Left ventricle myocardium superior (tissue), 1 donor: ENCODE measurements at regions of chr10 and their contacts with region 1.

Region 1: DNA sequence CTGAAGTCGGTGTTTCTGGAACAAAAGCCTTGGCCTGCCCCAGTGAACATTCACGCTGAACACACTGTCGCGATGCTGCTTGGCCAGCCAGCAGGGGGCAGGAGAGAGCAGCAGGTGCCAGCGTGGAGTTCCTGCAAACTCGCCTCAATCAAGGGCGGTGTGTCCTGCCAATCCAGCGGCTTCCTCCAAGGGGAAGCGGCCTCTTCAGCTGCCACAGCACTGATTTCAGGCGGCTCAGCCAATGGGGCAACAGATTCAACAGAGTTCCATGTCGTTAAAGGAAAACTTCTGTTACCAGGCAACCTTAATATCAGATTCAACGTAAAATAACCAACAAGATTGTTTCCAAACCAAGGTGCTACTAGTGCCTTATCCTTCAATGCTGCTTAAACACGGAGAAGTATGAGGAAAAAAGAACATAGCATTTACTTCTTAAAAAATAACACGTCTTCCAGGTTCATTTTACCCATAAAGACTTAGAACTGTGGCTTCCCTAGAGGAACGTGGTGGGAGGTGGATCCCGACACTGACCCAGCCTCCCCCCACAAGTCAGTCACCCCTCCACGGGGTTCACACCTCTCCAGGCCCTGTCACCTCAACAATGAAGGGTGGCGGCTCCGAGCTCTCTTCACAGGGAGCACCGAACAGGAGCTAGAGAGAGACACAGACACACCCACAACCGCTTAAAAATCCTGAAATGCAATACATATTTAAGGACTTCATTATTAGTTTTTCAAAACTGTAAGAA is 178.2 kb downstream of the DIP2C start:
- DNase-seq: peak; percentile 94
- ATAC-seq: peak; percentile 92

Region 2: DNA sequence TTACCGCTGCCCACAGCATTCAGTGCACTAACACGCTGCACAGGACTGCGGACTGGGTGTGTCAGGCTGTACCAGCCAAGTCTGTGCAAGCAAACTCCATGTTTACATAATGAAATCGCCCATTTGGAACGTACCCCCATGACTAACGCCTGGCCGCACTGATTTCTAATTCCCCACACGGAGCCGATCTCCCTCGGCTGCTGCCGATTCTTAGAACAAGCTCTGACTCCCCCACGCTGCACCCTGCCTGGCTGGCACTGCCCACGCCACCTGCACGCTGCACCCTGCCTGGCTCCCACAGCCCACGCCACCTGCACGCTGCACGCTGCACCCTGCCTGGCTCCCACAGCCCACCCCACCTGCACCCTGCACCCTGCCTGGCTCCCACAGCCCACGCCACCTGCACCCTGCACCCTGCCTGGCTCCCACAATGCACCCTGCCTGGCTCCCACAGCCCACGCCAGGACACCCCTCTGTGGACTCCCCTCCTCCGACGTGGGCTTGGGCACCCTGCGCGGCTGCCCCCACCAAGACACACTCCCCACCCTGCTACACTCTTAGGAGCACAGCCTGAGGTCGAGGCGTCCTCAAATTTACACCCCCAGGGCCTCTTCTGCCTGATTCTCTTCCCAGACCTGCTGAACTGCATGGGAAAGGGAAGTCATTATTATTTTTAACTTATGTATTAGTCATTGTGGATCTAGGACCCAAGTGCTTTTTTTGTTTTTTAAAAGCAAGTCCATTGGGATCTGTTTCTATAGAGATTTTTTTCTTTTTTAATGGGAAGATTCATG is 172.6 kb before region 1 on chr10:
- intact Hi-C with region 1: no loop called
- DNase-seq: no peak
- ATAC-seq: no peak

Region 3: DNA sequence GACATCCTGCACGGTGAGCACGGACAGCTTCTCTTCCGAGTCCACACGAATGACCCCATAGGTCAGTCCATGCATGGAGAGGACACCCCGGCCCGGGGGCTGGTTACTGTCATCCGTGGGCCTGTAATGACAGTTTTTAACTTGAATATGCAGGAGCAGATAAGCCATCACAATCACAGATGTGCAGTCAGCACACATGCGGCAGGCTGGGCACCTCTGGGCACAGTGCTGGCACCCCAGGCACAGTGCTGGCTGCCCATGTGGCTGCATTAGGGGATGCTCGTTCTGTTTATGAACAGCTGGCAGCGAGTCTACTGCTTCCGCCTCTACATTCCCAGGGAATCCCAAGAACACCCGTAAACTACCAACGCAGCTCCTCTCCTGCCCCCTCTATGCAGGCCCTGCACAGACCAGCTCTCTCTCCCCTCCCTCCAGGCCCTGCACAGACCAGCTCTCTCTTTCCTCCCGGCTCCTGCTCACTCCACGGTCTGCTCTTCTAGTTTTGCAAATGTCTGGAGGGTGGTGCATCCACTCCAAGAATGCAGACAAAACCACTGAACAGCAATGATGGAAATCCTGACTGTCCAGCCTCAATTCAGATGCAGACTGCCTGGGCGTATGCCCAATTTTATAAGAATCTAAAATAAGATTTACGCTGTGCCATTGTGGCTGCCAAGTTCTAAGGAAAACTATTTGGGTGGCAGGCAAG is 141.6 kb before region 1 on chr10:
- intact Hi-C with region 1: no loop called
- DNase-seq: no peak
- ATAC-seq: peak; percentile 51

Region 4: DNA sequence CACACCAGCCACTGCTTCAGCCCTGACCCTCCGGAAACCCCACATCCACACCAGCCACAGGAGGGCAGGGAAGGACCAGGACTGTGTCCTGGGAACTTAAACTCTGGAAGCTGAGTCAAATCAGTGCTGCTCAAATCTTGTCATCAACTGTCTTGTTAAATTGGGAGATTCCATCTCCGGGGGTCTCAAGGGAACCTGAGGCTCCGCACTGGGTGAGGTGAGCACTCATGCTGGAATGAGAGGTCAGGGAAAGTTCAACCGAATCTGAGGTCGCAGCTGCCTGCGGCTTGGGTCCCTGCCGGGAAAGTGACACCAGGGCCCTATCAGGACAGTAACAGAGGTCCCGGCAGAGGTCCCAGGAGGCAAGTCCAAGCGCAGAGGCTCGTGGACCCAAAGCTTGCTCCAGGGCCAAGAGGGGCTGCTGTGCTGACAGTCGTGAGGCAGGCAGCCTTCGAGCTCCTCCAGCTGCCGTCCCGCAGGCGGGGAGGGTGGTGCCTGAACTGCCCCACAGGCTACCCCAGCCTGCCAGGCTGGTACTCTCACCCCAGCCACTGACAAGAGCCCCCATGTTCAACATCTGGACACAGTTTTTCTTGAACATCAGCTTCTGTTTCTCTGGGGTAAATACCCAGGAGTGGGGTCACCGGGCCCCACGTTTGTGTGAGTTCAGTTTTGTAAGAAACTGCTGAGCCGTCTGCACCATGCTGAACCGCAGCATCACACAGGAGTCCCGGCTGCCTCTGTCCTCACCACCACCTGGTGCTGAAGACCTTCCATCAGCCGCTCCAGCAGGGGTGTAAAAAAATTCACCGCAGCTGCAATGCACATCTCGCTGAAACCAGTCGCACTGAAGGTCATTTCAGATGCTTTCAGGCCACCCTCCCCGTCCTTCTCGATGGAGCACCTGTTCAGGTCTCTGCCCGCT is 77.2 kb after region 1 on chr10:
- intact Hi-C with region 1: no loop called
- DNase-seq: peak; percentile 70
- ATAC-seq: peak; percentile 81

Region 5: DNA sequence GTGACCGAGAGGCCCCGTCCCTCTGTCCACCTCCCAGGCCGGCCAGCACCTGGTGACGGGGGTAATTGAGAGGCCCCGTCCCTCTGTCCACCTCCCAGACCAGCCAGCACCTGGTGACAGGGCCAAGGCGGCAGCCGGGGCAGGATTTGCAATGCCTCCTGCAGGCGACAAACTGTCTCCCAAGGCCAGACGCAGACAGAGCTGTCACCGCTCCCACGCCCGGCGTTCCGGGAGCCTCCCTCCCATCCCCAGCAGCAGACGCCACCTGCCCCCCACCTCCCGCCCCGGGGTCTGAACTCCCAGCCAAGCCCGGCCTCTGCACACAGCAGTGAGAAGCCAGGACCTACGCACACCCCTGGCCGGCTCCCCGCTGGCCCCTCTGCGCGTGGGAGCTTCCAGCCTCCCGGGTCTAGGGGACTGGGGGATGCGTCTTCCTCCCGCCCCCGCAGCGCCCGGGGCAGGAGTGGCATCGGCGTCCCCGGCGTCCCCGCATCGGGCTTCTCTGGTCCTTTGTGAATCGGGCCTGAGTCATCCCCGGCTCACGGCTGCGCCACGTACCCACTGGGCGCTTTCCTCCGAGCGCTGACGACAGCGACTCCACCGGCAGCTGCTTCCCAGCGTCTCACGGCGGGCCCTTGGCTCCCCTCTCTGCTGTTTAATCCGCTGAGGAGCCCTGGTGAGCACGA is 273.3 kb after region 1 on chr10:
- intact Hi-C with region 1: loop called (anchors 5 kb)
- DNase-seq: peak; percentile 66
- ATAC-seq: peak; percentile 70